Aorta (tissue), 5 donors: ENCODE measurements at regions of chr1 and their contacts with region 1.

Region 1: GRCh38 chr1:112674439-112674985 is at the start of gene MOV10:
- DNase-seq: peak; percentile 84 to 90
- ATAC-seq: peak; percentile 79
- H3K4me3 ChIP-seq: peak within 1 kb of the TSS; percentile 60 to 83
- H3K27ac ChIP-seq: peak within 1 kb of the TSS; percentile 9 to 19
- H3K4me1 ChIP-seq: no peaks in the 10 kb centered on the region
- H3K27me3 ChIP-seq: no peaks in the 10 kb centered on the region
- total RNA-seq, gene MOV10: 29.2 to 61.0 TPM

Region 2: GRCh38 chr1:112337028-112337531 is 337.4 kb before region 1 on chr1:
- intact Hi-C with region 1: no loop called
- DNase-seq: peak in 1 of 2 donors; percentile 58
- ATAC-seq: peak; percentile 76
- H3K4me3 ChIP-seq: no peak overlapping the region
- H3K27ac ChIP-seq: no peak overlapping the region
- H3K4me1 ChIP-seq: no peaks in the 10 kb centered on the region
- H3K27me3 ChIP-seq: no peaks in the 10 kb centered on the region

Region 3: GRCh38 chr1:112429749-112430148 is 244.8 kb before region 1 on chr1:
- intact Hi-C with region 1: no loop called
- DNase-seq: no peak
- ATAC-seq: no peak
- H3K4me3 ChIP-seq: no peak overlapping the region
- H3K27ac ChIP-seq: no peak overlapping the region
- H3K4me1 ChIP-seq: peaks cover 0 to 1% of the 10 kb centered on the region in 2 donors
- H3K27me3 ChIP-seq: no peaks in the 10 kb centered on the region

Region 4: GRCh38 chr1:112637254-112638116 is 37.0 kb before region 1 on chr1:
- intact Hi-C with region 1: no loop called
- DNase-seq: no peak
- ATAC-seq: no peak
- H3K4me3 ChIP-seq: no peak overlapping the region
- H3K27ac ChIP-seq: no peak overlapping the region
- H3K4me1 ChIP-seq: no peaks in the 10 kb centered on the region
- H3K27me3 ChIP-seq: no peaks in the 10 kb centered on the region

Region 5: DNA sequence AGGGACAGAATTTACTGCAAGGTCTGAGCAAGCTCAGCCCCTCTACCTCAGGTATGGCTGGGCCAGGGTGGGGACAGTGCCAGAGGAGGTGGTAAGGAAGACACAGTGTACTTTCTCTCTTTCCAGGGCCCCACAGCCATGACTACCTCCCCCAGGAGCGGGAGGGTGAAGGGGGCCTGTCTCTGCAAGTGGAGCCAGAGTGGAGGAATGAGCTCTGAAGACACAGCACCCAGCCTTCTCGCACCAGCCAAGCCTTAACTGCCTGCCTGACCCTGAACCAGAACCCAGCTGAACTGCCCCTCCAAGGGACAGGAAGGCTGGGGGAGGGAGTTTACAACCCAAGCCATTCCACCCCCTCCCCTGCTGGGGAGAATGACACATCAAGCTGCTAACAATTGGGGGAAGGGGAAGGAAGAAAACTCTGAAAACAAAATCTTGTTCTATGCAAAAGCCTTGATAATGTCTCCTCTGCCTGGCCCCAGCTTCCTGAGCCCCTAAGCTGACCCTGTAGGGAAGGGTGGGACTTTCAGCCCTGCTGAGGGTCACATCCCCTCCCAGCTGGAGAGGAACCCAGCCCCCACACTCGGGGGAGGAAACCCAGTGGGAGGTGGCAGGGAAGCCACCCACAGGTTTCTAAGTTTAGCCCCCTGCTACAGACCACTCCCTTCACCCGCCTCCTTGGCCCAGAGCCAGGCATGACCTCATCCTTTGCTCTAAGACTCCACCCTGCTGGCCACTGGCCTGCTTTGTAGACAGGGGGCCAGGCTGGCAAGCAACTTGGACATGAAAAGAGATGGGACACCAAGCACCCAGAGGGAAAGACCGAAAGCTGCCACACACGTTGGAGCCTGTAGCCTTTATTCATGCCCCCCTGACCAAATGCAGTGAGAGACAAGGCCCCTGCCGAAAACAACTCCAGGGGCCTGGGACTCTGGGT is 26.0 kb after region 1 on chr1:
- intact Hi-C with region 1: loop called (anchors 1 to 5 kb)
- DNase-seq: peak; percentile 98 to 100
- ATAC-seq: peak; percentile 88
- H3K4me3 ChIP-seq: no peak overlapping the region
- H3K27ac ChIP-seq: peak overlapping the region; percentile 52 to 82
- H3K4me1 ChIP-seq: no peaks in the 10 kb centered on the region
- H3K27me3 ChIP-seq: no peaks in the 10 kb centered on the region

Region 6: DNA sequence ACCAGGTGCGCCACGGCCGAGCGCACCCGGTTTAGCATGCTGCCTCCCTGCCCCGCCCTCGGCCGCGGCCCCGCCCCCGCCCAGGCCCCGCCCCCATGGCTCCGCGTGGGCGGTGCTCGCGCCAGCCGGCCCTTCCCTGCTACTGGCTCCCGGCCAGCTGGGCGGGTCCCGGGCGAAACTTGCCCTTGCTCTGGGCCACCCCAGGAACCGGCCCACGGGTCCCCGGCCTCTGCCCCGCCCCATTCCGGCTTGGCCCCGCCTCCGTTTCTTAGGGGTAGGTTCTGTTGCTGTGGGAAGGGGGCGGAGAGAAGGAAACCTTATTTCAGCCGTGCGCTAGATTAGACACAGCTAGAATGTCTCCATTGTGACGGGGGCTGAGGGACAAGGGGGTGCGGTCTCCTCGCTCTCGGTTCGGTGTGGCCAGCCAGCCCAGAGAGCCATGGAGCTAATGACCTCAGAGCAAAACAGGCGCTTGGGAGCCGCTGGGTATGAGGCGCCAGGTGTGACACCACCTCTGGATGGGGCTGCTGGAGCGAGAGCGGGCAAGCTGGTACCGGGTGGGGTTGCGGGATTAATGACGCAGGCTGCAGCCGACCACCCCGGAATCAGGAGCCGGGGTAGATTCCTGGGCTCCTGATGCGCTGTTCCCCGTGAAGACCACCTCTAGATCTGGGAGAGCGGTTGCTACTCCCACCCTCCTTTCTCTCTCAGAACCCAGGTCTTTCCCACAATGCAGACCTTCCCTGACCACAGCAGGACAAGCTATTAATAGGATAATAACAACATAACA is 40.9 kb after region 1 on chr1 and contains the start of gene PPM1J:
- intact Hi-C with region 1: no loop called
- DNase-seq: peak; percentile 99 to 100
- ATAC-seq: peak; percentile 93
- H3K4me3 ChIP-seq: peak within 1 kb of the TSS; percentile 14 to 37
- H3K27ac ChIP-seq: no peak within 1 kb of the TSS
- H3K4me1 ChIP-seq: no peaks in the 10 kb centered on the region
- H3K27me3 ChIP-seq: no peaks in the 10 kb centered on the region
- total RNA-seq, gene PPM1J: 3.7 to 4.3 TPM